HepG2 (cell line): ENCODE measurements at regions of chr12 and their contacts with region 1.

Region 1: GRCh38 chr12:53213348-53213747 is 6.3 kb upstream of the ITGB7 start:
- DNase-seq: peak; percentile 59
- ATAC-seq: peak; percentile 89
- H3K4me3 ChIP-seq: no peak overlapping the region
- H3K27ac ChIP-seq: no peak overlapping the region
- H3K4me1 ChIP-seq: peaks cover 54% of the 10 kb centered on the region
- H3K27me3 ChIP-seq: no peaks in the 10 kb centered on the region
- CTCF ChIP-seq: peak; percentile 98
- EP300 ChIP-seq: no peak
- POLR2A ChIP-seq: no peak
- RAD21 ChIP-seq: peak; percentile 97

Region 2: DNA sequence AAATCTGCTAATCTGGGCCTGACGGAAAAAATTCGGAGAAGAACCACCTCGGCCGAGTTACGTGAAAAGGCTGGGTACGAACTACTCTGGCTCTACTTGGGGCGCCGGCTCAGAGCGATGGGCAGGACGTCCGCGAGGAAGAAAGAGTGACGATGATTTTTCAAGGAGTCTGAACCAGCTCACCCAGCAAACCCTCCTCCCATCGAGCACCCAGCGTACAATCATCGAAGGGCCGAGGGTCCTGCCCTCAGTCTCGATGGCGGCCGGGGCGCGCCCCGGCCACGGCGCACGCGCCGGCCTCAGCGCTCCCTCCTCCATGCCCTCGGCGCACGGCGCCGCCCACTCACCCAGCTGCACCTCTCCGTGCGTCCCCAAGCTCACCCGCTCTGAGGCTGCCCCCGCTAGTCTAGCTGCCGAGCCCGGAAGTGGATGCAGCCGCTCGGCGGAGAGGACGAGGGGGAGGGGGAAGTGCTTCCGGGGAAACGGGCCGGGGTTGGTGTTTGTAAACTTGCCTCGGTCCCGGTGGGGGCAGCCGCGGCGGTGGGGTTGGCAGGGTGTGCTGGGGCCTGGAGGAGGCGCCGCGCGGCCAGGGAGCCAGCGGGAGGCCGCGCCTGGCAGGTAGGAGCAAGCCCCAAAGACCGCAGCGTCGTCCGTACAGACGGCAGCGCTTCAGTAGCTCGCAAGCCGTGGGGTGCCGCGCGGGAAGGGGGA is 33.0 kb before region 1 on chr12 and contains the starts of genes CSAD and ZNF740:
- CTCF ChIA-PET with region 1: no interaction called
- POLR2A ChIA-PET with region 1: no interaction called
- in situ Hi-C with region 1: no loop called
- intact Hi-C with region 1: no loop called
- DNase-seq: peak; percentile 95
- ATAC-seq: peak; percentile 98
- H3K4me3 ChIP-seq: peak within 1 kb of the TSS; percentile 64 to 93 (median 82)
- H3K27ac ChIP-seq: peak within 1 kb of the TSS; percentile 91
- H3K4me1 ChIP-seq: peaks cover 56% of the 10 kb centered on the region
- H3K27me3 ChIP-seq: no peaks in the 10 kb centered on the region; a peak in 1 of 5 replicates
- CTCF ChIP-seq: no peak; the same call in 1 of the 2 replicates
- EP300 ChIP-seq: no peak
- POLR2A ChIP-seq: peak; percentile 75 to 88
- RAD21 ChIP-seq: no peak
- total RNA-seq, gene CSAD: 2.7 and 7.2 TPM in 2 replicates
- total RNA-seq, gene ZNF740: 15.0 and 16.9 TPM in 2 replicates

Region 3: DNA sequence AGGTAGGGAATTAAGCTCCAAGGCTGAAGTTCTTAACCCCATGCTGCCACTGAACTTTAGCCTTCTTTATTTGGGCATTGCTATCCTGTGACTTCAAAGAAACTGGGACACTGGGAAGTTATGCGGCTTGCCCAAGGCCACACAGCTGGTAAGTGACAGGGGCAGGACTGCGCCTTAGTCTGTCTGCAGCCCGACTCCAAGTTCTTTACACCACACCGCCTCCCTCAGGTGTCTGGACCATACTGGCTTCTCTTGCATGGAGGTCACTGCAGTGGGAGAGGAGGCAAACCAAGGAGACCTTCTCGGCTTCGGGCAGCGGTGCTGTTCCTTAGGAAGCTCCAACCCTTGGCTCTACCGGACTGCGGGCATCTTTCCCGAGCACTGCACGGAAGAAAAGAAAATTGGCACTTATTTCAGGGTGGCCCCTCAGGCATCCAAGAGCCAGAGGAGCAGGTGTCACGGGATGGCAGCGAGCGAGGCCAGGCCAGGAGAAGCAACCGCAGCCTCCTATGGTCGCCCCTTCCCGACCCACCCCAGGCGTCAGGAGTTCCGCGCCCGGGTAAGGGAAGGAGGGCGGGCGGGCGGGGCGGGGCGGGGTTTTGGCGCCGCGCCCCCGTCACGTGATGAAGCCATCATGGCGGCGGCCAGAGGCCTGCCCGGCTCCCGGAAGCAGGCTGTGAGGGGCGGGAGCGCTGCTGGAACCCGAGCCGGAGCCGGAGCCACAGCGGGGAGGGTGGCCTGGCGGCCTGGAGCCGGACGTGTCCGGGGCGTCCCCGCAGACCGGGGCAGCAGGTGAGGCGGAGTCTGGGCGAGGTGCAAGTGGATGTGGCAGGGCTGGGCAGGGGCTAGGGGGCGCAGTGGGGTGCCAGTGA is 38.4 kb after region 1 on chr12:
- CTCF ChIA-PET with region 1: interaction called, 21 read pairs
- POLR2A ChIA-PET with region 1: interaction called, 17 read pairs
- in situ Hi-C with region 1: no loop called
- intact Hi-C with region 1: loop called (anchors 5 kb)
- DNase-seq: peak; percentile 81
- ATAC-seq: peak; percentile 85
- H3K4me3 ChIP-seq: peak overlapping the region; percentile 85 to 96 (median 93)
- H3K27ac ChIP-seq: peak overlapping the region; percentile 80
- H3K4me1 ChIP-seq: peaks cover 37% of the 10 kb centered on the region
- H3K27me3 ChIP-seq: no peaks in the 10 kb centered on the region
- CTCF ChIP-seq: peak; percentile 75
- EP300 ChIP-seq: peak in 1 of 2 experiments; percentile 40; a peak in 1 of 4 replicates
- POLR2A ChIP-seq: peak; percentile 70 to 75
- RAD21 ChIP-seq: peak; percentile 37

Region 4: GRCh38 chr12:53267999-53268647 is 54.8 kb after region 1 on chr12 and contains the start of gene ESPL1:
- CTCF ChIA-PET with region 1: interaction called, 5 read pairs
- POLR2A ChIA-PET with region 1: no interaction called
- in situ Hi-C with region 1: loop called (anchors 5 kb)
- intact Hi-C with region 1: loop called (anchors 1 kb)
- DNase-seq: peak; percentile 65
- ATAC-seq: peak; percentile 91
- H3K4me3 ChIP-seq: peak within 1 kb of the TSS; percentile 77 to 96 (median 91)
- H3K27ac ChIP-seq: peak within 1 kb of the TSS; percentile 32
- H3K4me1 ChIP-seq: peaks cover 28% of the 10 kb centered on the region
- H3K27me3 ChIP-seq: no peaks in the 10 kb centered on the region
- CTCF ChIP-seq: peak; percentile 77
- EP300 ChIP-seq: no peak
- POLR2A ChIP-seq: no peak
- RAD21 ChIP-seq: peak; percentile 57
- total RNA-seq, gene ESPL1: 11.5 and 11.6 TPM in 2 replicates

Region 5: DNA sequence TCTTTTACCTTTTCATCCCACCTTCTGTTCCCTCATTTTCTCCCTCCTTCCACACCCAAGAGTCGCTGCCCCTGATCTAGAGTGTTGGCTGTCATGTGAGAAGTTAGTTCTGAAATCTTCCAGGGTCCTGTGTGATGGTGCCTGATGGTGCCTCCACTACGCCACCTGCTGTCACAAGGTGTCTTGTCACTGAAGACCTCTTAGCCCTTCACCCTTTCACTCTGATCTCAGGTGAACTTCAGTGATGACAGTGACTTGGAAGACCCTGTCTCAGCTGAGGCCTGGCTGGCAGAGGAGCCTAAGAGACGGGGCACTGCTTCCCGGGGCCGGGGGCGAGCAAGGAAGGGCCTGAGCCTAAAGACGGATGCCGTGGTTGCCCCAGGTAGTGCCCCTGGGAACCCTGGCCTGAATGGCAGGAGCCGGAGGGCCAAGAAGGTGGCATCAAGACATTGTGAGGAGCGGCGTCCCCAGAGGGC is 74.4 kb after region 1 on chr12:
- CTCF ChIA-PET with region 1: interaction called, 66 read pairs
- POLR2A ChIA-PET with region 1: no interaction called
- in situ Hi-C with region 1: loop called (anchors 5 kb)
- intact Hi-C with region 1: loop called (anchors 1 kb)
- DNase-seq: peak; percentile 38
- ATAC-seq: peak; percentile 84
- H3K4me3 ChIP-seq: no peak overlapping the region
- H3K27ac ChIP-seq: no peak overlapping the region
- H3K4me1 ChIP-seq: no peaks in the 10 kb centered on the region
- H3K27me3 ChIP-seq: no peaks in the 10 kb centered on the region
- CTCF ChIP-seq: peak; percentile 82
- EP300 ChIP-seq: no peak
- POLR2A ChIP-seq: no peak
- RAD21 ChIP-seq: peak; percentile 66